AG04449 (cell line): ENCODE measurements at regions of chr1 and their contacts with region 1.

Region 1: GRCh38 chr1:107782217-107782845 is 182.6 kb downstream of the VAV3 start:
- DNase-seq: peak; percentile 5
- H3K4me3 ChIP-seq: no peak overlapping the region
- CTCF ChIP-seq: peak; percentile 35

Region 2: DNA sequence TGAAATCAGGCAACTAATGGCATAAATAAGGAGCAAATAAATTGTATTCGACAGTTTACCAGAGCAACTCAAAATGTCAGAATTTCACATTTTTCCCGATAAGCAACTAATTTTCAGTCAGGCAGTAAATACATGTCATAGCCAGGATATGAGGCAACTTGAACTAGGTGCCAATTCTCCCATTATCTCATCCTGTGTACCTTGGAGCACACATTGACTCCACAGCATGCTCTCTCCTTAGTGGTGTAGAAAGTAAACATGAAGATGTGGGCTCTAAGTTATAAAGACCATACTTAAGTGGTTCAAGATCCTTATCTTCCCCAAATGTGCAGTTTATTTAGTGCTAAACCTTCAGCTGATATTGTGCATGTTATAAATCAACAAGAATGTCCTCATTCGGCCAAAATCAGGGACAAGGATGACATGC is 15.2 kb before region 1 on chr1:
- CTCF ChIA-PET with region 1: interaction called, 12 read pairs
- POLR2A ChIA-PET with region 1: no interaction called
- DNase-seq: no peak
- H3K4me3 ChIP-seq: no peak overlapping the region
- CTCF ChIP-seq: no peak

Region 3: GRCh38 chr1:107795441-107795840 is 13.1 kb after region 1 on chr1:
- CTCF ChIA-PET with region 1: interaction called, 19 read pairs
- POLR2A ChIA-PET with region 1: no interaction called
- DNase-seq: no peak
- H3K4me3 ChIP-seq: no peak overlapping the region
- CTCF ChIP-seq: no peak

Region 4: DNA sequence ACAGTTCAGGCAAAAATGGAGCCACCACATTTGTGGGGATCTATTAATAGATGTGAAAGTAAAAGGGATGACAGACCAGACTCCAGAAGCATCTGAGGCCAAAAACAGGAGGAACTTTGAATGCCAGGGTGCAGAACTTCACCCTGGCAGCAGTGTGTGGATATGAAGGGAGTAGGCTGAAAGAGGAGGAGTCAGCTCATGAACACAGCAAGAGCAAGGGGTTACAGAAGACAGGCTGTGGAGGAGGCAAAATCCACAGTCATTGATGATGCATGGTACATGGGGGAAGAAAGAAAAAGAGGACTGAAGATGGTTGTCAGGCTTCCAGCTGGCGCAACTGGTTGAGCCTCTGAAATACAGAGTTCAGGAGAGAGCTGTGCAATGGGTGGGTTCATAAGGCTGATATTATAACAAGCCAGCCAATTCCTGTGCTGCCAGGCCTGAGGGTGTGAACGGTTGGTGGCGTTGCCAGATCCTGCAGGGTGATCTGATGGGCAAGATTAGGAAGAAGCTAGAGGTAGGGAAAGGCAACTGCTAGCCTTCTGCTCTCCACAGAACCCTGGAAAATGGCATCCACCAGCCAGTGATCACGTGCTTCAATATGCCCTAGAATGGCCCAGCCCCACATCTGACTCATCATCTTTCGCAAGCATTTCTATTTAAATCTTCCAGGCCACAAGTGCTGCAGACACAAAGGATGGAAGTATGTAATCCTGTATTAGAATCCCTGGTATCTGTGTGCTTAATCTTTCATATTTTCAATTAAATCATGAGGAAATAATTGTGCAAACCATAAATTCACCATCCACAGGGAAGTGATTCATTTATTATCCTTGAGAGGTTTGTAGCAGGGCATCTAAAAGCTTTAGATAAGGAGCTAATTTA is 335.9 kb after region 1 on chr1:
- CTCF ChIA-PET with region 1: interaction called, 422 read pairs
- POLR2A ChIA-PET with region 1: no interaction called
- DNase-seq: peak; percentile 40
- H3K4me3 ChIP-seq: no peak overlapping the region
- CTCF ChIP-seq: no peak

Region 5: DNA sequence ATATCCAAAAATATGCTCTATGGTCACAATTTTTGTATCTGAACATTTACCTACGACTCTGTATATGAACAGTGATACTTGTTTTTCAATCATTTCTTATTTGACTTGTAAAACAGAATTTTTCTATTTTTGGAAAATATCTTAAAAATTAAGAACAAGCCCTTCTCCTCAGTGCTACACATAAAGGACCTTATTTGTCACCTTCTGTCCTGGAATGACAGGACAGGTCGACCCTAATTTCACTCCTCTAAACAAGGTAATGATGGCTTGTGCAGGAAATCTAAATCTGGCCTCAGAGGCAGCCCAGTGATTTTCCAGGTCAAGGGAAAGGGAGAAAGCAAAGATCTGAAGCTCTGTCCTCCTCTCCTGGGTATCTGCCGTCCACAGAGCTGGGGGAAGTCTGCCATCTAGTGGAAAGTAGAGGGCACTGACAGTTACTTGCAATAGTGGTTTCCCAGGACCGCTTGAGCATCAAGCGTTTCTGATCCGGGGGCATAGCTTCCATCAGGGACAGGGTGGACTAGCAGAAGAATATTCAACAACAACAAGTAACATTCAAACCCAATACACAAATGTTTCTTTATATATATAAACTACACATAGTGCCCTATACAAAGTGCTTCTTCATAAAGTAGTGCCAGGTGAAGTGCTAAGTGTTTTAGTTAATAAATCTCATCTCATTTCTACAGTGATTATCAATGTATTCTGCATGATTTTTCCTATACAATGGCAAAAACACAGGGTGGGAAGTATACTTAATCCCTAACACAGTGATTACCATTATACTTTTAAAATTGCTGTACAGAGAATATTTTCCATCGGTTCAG is 343.2 kb after region 1 on chr1:
- CTCF ChIA-PET with region 1: interaction called, 422 read pairs
- POLR2A ChIA-PET with region 1: interaction called, 4 read pairs
- DNase-seq: peak; percentile 29
- H3K4me3 ChIP-seq: no peak overlapping the region
- CTCF ChIP-seq: peak; percentile 89